Activated CD4-positive, alpha-beta memory T cell treated with anti-CD3 and anti-CD28 coated beads for 36 hours (primary cell): ENCODE measurements at regions of chr2 and their contacts with region 1.

Region 1: DNA sequence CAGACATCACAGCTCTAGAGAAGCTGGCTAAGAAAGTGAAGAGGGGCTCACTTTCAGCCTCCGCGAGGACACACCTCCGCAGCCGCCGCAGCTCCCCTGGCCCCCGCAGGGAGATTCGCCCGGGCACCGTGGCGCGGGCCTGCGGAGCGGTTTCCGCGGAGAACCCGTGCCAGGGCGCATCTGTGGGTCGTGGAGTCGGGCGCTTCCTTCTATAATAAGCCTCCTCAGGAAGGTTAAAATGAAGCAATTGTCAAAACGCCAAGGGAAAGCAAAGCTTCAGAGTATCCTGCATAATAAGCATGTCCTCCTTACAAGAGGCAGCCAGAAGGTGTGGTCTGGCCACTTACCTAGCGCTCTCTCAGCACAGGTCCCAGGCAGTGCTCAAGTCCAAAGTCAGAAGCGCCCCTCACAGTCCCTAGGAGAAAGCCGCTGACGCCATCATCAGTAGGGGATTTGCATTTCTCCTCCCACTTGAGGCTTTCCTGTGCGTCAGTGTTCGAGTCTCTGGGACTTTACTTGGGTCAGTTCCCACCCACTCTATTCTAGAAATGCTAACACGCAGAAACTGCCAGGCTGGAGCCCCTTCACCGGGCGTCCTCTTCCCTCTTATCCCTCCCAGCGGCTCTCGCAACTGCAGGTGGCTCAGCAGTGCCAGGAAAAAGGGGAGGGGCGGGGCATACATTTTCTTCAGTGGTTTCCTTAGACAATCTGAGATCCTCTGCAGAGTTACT is at the start of gene STAT4:
- DNase-seq: peak; percentile 93
- H3K4me3 Mint-ChIP-seq: peak within 1 kb of the TSS; percentile 96
- H3K27ac Mint-ChIP-seq: peak within 1 kb of the TSS; percentile 95
- H3K4me1 Mint-ChIP-seq: peaks cover 64% of the 10 kb centered on the region
- H3K27me3 Mint-ChIP-seq: no peaks in the 10 kb centered on the region
- total RNA-seq, gene STAT4: 52.4 to 52.6 TPM

Region 2: GRCh38 chr2:190319555-190320498 is 830.9 kb before region 1 on chr2 and contains the start of gene HIBCH:
- CTCF ChIA-PET with region 1: no interaction called
- POLR2A ChIA-PET with region 1: no interaction called
- intact Hi-C with region 1: loop called (anchors 1 kb)
- DNase-seq: peak; percentile 96
- H3K4me3 Mint-ChIP-seq: peak within 1 kb of the TSS; percentile 87
- H3K27ac Mint-ChIP-seq: peak within 1 kb of the TSS; percentile 94
- H3K4me1 Mint-ChIP-seq: peaks cover 52% of the 10 kb centered on the region
- H3K27me3 Mint-ChIP-seq: no peaks in the 10 kb centered on the region
- total RNA-seq, gene HIBCH: 33.9 to 37.8 TPM

Region 3: DNA sequence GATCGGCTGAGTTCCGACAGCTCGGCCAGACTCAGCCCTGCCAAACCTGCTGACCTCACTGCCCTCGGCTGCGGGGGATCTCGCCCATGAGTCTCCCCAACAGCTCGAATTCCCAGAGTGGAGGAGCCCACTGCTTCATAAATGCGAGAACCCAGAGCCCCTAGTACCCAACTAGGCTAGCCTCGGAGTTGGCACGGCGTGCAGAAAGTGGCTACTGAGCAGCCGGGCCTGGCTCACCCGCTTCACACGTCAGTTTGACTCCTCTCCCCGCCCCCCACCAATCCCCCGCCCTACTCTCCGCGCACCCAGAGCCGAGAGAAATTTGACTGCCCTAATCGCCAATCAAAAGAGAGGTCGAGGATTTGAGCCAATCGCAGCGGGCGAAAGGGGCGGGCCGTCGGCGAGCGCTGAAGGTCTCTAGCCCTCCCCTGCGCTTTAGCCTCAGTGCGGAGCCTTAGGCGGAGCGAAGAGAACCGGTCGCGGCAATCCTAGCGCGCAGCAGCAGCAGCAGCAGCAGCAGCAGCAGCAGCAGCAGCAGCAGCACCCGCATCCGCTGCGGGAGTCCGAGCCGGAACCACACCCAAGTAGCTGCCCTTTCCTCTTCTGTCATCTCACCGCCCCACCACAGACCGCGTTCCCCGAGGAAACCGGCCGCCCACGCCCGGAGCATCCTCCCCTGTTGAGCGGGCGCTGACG is 270.2 kb before region 1 on chr2 and contains the start of gene GLS:
- CTCF ChIA-PET with region 1: no interaction called
- POLR2A ChIA-PET with region 1: interaction called, 3 read pairs
- intact Hi-C with region 1: loop called (anchors 1 kb)
- DNase-seq: peak; percentile 98
- H3K4me3 Mint-ChIP-seq: peak within 1 kb of the TSS; percentile 98
- H3K27ac Mint-ChIP-seq: peak within 1 kb of the TSS; percentile 99
- H3K4me1 Mint-ChIP-seq: peaks cover 36% of the 10 kb centered on the region
- H3K27me3 Mint-ChIP-seq: peaks cover 4% of the 10 kb centered on the region
- total RNA-seq, gene GLS: 209 to 210 TPM

Region 4: DNA sequence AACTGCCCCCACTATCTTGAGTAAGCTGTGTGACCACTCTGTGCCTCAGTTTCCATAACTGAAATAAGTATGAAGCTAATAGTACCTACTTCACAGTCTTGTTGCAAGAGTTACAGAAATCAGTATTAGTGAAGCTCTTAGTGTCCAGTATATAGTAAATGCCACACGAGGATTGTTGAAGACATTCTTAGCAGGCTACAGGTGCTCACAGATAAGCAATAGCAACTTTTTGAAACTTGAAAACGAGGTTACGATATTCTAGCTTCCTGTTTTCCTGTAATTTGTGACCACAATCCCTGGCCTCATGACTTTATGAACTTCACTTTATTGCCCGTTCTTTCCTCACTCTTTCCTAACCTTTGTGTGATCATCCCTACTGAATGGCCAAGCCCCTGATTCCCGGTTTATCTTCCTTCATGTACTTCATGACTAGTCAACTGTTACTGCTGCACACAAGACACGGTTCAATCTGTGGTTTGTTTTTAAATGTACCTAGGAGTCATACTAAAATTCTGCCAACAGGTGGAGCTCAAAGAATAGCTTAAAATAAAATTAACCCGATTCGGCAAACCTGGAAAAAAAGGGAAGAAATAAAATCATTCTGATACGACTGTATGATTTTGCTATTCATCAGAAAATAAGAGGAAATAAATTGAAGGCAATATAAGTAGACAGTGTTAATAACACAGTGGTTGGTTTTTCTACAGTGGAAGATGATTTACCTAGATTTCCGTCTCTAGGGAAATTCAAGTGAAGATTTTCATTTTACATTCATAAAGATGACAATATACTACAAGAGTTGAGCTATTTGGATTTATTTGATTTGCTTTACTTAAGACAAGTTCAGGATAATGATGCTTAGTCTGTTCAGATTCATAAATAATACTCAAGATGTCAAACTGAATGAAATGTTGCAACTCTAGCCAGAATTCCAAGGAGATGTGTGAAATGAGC is 98.7 kb before region 1 on chr2:
- CTCF ChIA-PET with region 1: interaction called, 412 read pairs
- POLR2A ChIA-PET with region 1: interaction called, 9 read pairs
- intact Hi-C with region 1: loop called (anchors 1 kb)
- DNase-seq: no peak
- H3K4me3 Mint-ChIP-seq: no peak overlapping the region
- H3K27ac Mint-ChIP-seq: no peak overlapping the region
- H3K4me1 Mint-ChIP-seq: peaks cover 21% of the 10 kb centered on the region
- H3K27me3 Mint-ChIP-seq: no peaks in the 10 kb centered on the region

Region 5: DNA sequence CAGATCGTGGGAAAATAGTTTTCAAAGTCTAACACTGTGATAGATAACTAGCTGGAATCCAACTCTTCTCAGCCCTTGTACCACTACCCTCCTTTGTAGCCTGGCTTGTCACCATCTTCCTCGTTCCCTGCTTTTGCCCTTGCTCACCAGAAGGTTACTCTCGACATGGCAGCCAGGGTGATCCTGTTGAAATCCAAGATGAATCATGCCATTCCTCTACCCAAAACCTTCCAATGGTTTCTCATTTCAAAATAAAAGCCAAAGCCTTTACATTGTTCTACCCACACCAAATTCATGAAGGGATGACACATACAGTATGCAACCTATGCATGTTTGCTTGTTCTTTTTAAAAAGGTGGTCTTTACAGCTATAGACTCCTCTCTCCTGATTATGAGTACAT is 45.7 kb before region 1 on chr2:
- CTCF ChIA-PET with region 1: interaction called, 11 read pairs
- POLR2A ChIA-PET with region 1: no interaction called
- intact Hi-C with region 1: no loop called
- DNase-seq: no peak
- H3K4me3 Mint-ChIP-seq: no peak overlapping the region
- H3K27ac Mint-ChIP-seq: peak overlapping the region; percentile 44
- H3K4me1 Mint-ChIP-seq: peaks cover 76% of the 10 kb centered on the region
- H3K27me3 Mint-ChIP-seq: no peaks in the 10 kb centered on the region

Region 6: GRCh38 chr2:191165176-191165643 is 14.4 kb after region 1 on chr2:
- CTCF ChIA-PET with region 1: interaction called, 31 read pairs
- POLR2A ChIA-PET with region 1: no interaction called
- intact Hi-C with region 1: no loop called
- DNase-seq: no peak
- H3K4me3 Mint-ChIP-seq: no peak overlapping the region
- H3K27ac Mint-ChIP-seq: no peak overlapping the region
- H3K4me1 Mint-ChIP-seq: peaks cover 13% of the 10 kb centered on the region
- H3K27me3 Mint-ChIP-seq: no peaks in the 10 kb centered on the region

Region 7: GRCh38 chr2:191333911-191334357 is 183.2 kb after region 1 on chr2:
- CTCF ChIA-PET with region 1: no interaction called
- POLR2A ChIA-PET with region 1: no interaction called
- intact Hi-C with region 1: no loop called
- DNase-seq: no peak
- H3K4me3 Mint-ChIP-seq: no peak overlapping the region
- H3K27ac Mint-ChIP-seq: no peak overlapping the region
- H3K4me1 Mint-ChIP-seq: no peaks in the 10 kb centered on the region
- H3K27me3 Mint-ChIP-seq: no peaks in the 10 kb centered on the region

Region 8: DNA sequence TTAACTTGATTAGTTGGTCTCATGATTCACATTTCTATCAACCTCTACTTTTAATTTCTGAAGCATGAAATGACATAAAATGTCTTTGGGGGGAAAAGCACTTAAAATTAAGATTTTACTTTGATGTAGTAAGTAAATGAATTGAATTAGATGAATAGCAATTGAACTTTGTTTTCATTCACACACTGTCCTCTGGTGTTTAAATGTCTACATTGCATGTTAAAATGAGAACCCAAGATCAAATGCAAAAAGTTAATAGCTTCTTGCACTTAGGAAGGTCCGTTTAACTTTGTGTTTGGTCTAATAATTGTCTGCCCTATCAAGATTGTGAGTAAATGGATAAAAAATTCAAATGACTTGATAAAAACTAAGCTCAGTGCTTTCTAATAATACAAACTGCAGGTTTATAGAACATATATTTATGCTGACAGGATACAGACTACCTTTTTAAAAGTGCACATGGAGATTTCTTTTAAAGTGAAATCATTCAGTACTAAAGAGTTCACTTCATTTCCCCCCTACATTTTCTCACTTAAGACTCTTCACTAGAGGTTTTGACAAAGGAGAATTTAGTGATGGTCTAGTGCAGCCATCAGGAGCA is 370.9 kb after region 1 on chr2:
- CTCF ChIA-PET with region 1: interaction called, 14 read pairs
- POLR2A ChIA-PET with region 1: no interaction called
- intact Hi-C with region 1: no loop called
- DNase-seq: no peak
- H3K4me3 Mint-ChIP-seq: no peak overlapping the region
- H3K27ac Mint-ChIP-seq: no peak overlapping the region
- H3K4me1 Mint-ChIP-seq: no peaks in the 10 kb centered on the region
- H3K27me3 Mint-ChIP-seq: peaks cover 1% of the 10 kb centered on the region